Naive thymus-derived CD4-positive, alpha-beta T cell (primary cell): ENCODE measurements at regions of chr2 and their contacts with region 1.

Region 1: GRCh38 chr2:8681786-8682692 is at the start of gene ID2:
- DNase-seq: peak; percentile 96 to 99 (median 99)
- ATAC-seq: peak; percentile 83
- H3K4me3 ChIP-seq: peak within 1 kb of the TSS; percentile 89
- H3K4me3 Mint-ChIP-seq: peak within 1 kb of the TSS; percentile 89 to 100 (median 98)
- H3K27ac ChIP-seq: peak within 1 kb of the TSS; percentile 81
- H3K27ac Mint-ChIP-seq: peak within 1 kb of the TSS; percentile 89 to 97 (median 95)
- H3K4me1 ChIP-seq: peaks cover 10 to 24% of the 10 kb centered on the region in 2 donors
- H3K4me1 Mint-ChIP-seq: peaks cover 24 to 49% (median 43%) of the 10 kb centered on the region in 7 donors
- H3K27me3 ChIP-seq: peaks cover 0 to 18% of the 10 kb centered on the region in 2 donors
- H3K27me3 Mint-ChIP-seq: peaks cover 12 to 24% (median 20%) of the 10 kb centered on the region in 5 donors
- total RNA-seq, gene ID2: 43.0 to 185 (median 77.1) TPM

Region 2: DNA sequence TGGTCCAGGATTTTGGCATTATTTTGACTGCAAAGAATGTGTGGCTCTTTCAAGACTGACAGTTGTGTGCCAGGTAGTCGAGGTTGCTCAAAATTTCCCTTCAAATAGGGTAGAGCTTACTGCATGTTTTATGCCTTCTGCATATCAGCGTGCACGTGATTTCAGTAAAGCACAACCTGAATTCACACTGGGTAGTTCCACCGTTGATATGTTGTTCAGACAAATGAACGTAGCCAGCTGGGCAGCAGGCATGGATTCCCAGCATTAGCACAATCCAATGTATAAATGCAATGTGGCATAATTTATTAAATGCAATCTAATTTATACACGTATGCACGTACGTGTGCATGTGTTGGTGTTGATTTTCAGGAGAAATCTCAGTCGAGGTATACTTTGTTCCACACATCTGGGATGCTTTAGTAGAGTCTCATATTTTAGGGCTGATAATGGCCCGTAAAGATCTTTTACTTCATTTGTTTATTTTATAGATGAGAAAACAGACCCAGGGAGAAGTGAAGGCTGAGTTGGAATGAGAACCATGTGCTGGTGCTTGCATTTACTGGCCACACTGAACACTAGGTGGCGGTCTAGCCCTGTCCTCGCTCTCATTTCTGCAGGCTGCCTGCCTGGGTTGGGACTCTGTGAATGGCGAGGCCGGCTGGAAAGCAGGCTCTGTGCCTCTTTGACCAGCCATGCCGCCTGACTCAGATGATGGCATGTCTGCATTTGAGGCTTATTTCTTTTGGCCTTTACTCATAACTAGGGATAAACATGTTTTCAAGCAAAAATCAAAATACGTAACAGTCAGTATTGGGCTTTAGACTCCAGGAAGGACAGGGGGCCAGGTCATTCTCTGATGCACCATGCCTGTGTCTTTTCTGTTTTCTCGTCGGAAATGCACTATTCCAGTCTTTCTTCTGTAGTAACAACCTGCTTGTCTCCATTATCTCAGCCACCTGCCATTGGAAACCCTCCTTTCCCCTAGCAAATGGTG is 1644.4 kb before region 1 on chr2:
- CTCF ChIA-PET with region 1: no interaction called
- POLR2A ChIA-PET with region 1: no interaction called
- intact Hi-C with region 1: loop called in 1 of 2 experiments (anchors 2 kb)
- DNase-seq: peak; percentile 16 to 64 (median 56)
- ATAC-seq: peak; percentile 90
- H3K4me3 ChIP-seq: no peak overlapping the region
- H3K4me3 Mint-ChIP-seq: no peak overlapping the region
- H3K27ac ChIP-seq: no peak overlapping the region
- H3K27ac Mint-ChIP-seq: peak overlapping the region in 8 of 9 donors; percentile 25 to 74 (median 61)
- H3K4me1 ChIP-seq: no peaks in the 10 kb centered on the region
- H3K4me1 Mint-ChIP-seq: peaks cover 2 to 20% (median 10%) of the 10 kb centered on the region in 7 donors
- H3K27me3 ChIP-seq: no peaks in the 10 kb centered on the region
- H3K27me3 Mint-ChIP-seq: no peaks in the 10 kb centered on the region

Region 3: DNA sequence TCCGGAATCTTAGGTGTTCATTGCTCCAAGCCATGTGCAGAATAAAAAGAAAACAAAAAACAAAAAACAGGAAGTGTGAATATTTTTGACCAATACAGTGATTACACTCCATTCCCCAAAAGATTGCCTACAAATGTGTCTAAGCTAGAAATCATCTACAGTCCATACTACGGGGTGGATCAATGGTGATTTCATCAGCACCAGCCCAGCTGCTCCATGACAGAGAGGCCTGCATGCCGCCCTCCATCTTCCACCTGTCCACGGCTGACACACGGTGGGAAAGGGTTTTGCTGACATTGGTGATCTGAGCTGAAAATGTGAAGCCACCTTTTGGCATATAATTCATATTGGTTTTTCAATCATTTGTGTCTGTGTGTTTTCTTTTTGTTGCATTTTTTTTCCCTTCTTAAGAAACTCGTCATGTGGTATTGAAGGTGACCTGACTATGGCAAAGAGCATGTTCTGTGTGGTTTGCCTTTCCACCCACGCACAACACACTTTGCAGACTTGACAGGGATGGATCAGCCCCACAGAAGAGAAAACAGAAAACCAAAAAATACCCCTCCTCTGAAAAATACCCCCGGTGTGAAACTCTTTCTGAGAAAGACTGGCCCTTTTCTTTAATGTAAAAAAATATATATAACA is 1231.7 kb before region 1 on chr2:
- CTCF ChIA-PET with region 1: interaction called, 7 read pairs
- POLR2A ChIA-PET with region 1: interaction called, 27 read pairs
- intact Hi-C with region 1: loop called (anchors 1 kb)
- DNase-seq: peak in 8 of 9 donors; percentile 66 to 88 (median 72)
- ATAC-seq: peak; percentile 91
- H3K4me3 ChIP-seq: no peak overlapping the region
- H3K4me3 Mint-ChIP-seq: peak overlapping the region; percentile 39 to 87 (median 77)
- H3K27ac ChIP-seq: peak overlapping the region; percentile 60
- H3K27ac Mint-ChIP-seq: peak overlapping the region; percentile 90 to 98 (median 96)
- H3K4me1 ChIP-seq: peaks cover 41 to 65% of the 10 kb centered on the region in 2 donors
- H3K4me1 Mint-ChIP-seq: peaks cover 44 to 93% (median 78%) of the 10 kb centered on the region in 7 donors
- H3K27me3 ChIP-seq: no peaks in the 10 kb centered on the region
- H3K27me3 Mint-ChIP-seq: no peaks in the 10 kb centered on the region

Region 4: DNA sequence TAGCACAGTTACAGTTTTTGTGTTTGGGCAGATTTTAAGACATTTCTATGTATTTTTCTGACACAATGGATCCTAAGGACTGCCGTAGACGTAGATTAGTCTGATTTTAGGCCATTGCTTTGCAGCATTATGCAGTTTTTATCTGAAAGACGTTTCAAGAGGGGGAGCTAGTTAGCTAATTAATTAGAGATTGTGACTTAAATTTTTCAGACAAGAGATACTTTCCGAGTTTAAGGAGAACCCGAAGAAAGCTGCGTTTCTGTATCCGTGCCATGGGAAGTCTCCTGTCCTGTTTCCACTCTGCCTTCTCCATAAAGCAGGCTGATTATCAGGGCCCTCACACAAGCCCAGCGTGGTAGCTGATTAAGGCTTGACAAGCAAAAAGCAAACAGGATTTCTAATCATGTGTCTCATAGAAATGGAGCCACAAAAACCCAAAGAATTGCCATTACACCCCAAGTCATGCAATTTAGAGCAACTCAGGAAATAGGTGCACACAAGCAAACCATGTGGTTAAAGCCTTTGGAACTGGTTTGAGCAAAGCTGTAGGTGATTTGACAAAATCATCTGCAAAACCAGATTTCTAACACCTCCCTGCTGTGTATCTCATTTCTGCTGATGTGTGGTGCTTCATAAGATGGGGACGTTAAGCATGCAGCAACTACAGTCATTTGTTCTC is 956.7 kb before region 1 on chr2:
- CTCF ChIA-PET with region 1: no interaction called
- POLR2A ChIA-PET with region 1: interaction called, 4 read pairs
- intact Hi-C with region 1: loop called (anchors 2 kb)
- DNase-seq: peak in 5 of 9 donors; percentile 17 to 51 (median 38)
- ATAC-seq: peak; percentile 78
- H3K4me3 ChIP-seq: peak overlapping the region; percentile 25
- H3K4me3 Mint-ChIP-seq: peak overlapping the region in 9 of 10 donors; percentile 26 to 86 (median 58)
- H3K27ac ChIP-seq: no peak overlapping the region
- H3K27ac Mint-ChIP-seq: peak overlapping the region; percentile 8 to 89 (median 65)
- H3K4me1 ChIP-seq: peaks cover 17 to 34% of the 10 kb centered on the region in 2 donors
- H3K4me1 Mint-ChIP-seq: peaks cover 13 to 63% (median 34%) of the 10 kb centered on the region in 7 donors
- H3K27me3 ChIP-seq: no peaks in the 10 kb centered on the region
- H3K27me3 Mint-ChIP-seq: no peaks in the 10 kb centered on the region

Region 5: DNA sequence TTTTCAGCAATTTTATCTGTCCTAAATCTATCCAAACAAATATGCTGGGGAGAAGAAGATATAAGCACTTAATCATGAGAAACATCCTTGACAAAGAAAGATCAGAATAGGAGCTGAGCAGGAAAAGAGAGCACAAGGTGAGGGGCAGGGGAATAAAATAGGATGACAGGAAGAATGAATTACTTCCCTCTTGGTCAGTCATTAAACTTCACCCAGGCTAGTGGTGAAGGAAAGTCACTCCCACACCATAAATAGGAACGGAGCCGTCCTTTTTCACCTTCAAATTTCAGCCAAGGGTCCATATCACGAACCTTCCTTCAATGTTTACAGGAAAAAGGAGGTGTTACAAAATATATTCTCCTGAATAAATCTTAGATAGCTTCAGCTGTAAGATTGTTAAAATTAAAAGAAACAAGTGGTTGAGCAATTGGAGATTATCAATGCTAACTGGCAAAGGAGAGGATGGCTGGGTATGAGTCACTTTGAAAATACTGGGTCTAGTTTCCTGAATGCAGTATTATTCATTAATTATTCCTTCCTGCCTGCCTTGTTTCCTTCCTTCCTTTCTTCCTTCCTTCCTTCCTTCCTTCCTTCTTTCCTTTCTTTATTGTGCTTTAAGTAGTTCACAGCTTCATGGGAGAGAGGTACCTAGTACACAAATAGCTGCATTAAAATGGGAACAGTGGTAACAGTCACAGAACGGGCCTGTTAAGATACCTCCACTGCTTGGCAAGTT is 292.5 kb before region 1 on chr2:
- CTCF ChIA-PET with region 1: no interaction called
- POLR2A ChIA-PET with region 1: no interaction called
- intact Hi-C with region 1: no loop called
- DNase-seq: no peak
- ATAC-seq: no peak
- H3K4me3 ChIP-seq: no peak overlapping the region
- H3K4me3 Mint-ChIP-seq: no peak overlapping the region
- H3K27ac ChIP-seq: no peak overlapping the region
- H3K27ac Mint-ChIP-seq: no peak overlapping the region
- H3K4me1 ChIP-seq: no peaks in the 10 kb centered on the region
- H3K4me1 Mint-ChIP-seq: peaks cover 0 to 7% (median 0%) of the 10 kb centered on the region in 7 donors
- H3K27me3 ChIP-seq: no peaks in the 10 kb centered on the region
- H3K27me3 Mint-ChIP-seq: peaks cover 0 to 2% (median 0%) of the 10 kb centered on the region in 5 donors

Region 6: GRCh38 chr2:8477552-8478470 is 204.2 kb before region 1 on chr2:
- CTCF ChIA-PET with region 1: no interaction called
- POLR2A ChIA-PET with region 1: interaction called, 3 read pairs
- intact Hi-C with region 1: loop called in 1 of 2 experiments (anchors 5 kb)
- DNase-seq: peak in 2 of 9 donors; percentile 19
- ATAC-seq: peak; percentile 66
- H3K4me3 ChIP-seq: peak overlapping the region; percentile 15
- H3K4me3 Mint-ChIP-seq: peak overlapping the region; percentile 26 to 72 (median 53)
- H3K27ac ChIP-seq: no peak overlapping the region
- H3K27ac Mint-ChIP-seq: peak overlapping the region in 7 of 9 donors; percentile 5 to 75 (median 20)
- H3K4me1 ChIP-seq: peaks cover 5 to 57% of the 10 kb centered on the region in 2 donors
- H3K4me1 Mint-ChIP-seq: peaks cover 38 to 92% (median 53%) of the 10 kb centered on the region in 7 donors
- H3K27me3 ChIP-seq: no peaks in the 10 kb centered on the region
- H3K27me3 Mint-ChIP-seq: no peaks in the 10 kb centered on the region

Region 7: DNA sequence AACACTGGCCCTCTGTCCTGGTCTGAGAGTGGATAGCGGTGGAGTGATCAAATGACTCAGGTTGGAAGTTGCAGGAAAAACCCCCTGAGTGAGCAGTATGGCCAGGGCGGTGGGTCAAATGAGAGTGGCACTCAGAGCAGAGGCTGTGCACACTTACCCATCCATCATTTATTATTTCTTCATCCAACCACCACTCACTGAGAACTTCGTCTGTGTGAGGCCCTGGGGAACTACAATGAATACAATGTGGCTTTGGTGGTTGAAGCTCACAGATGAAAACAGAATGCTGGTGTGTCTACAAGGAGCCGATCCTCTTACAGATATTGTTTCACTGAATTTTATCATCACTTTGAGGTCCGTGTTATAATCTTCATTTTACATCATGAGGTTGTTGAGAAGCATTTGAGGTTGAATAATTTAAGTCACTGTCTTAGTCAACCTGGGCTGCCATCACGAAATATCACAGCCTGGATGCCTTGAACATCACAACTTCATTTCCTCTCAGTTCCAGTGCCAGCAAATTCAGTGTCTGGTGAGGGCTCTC is 73.6 kb before region 1 on chr2:
- CTCF ChIA-PET with region 1: interaction called, 4 read pairs
- POLR2A ChIA-PET with region 1: no interaction called
- intact Hi-C with region 1: loop called in 1 of 2 experiments (anchors 2 kb)
- DNase-seq: no peak
- ATAC-seq: peak; percentile 72
- H3K4me3 ChIP-seq: no peak overlapping the region
- H3K4me3 Mint-ChIP-seq: peak overlapping the region in 1 of 10 donors; percentile 47
- H3K27ac ChIP-seq: no peak overlapping the region
- H3K27ac Mint-ChIP-seq: peak overlapping the region in 1 of 9 donors; percentile 54
- H3K4me1 ChIP-seq: no peaks in the 10 kb centered on the region
- H3K4me1 Mint-ChIP-seq: peaks cover 0 to 29% (median 4%) of the 10 kb centered on the region in 7 donors
- H3K27me3 ChIP-seq: no peaks in the 10 kb centered on the region
- H3K27me3 Mint-ChIP-seq: peaks cover 0 to 2% (median 0%) of the 10 kb centered on the region in 5 donors

Region 8: DNA sequence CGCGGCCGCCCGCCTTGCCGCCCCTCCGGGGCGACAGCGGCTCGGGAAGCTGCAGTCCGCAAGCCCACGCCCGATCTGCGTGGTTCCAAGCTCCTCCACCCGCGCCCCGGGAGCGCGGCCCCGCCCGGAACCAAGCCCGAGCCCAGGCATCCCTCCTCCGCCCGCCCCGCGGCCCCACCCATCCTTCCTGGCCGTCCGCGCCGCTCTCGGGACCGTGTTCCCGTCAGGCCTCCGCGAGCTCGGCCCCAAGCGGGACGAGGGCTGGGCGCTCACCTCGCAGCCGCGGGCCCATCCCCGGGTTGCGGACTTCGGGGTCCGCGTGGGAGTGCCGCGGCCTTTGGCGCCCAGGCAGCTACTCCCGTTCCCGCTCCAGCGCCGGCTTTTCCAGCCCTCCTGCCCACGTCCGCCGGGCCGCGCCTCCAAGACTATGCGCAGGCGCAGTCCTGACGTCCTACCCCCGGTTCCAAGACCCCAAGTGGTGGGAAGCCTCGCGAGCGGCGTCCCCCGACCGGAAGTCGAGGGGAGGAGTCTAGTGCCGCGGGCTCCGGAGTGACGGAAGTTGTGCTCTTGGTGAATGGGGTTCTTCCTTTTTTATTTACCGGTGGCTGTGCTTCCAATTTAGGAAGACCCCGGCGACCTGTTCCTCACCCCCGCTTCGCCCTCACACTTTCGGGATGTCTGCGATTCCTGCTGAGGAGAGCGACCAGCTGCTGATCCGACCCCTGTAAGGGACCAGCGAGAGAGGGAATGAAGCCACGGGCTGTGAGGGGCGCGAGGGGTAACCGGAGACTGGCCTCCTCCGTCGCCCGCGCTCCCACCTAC is 741.3 kb after region 1 on chr2 and contains the starts of genes CPSF3 and ITGB1BP1:
- CTCF ChIA-PET with region 1: no interaction called
- POLR2A ChIA-PET with region 1: interaction called, 5 read pairs
- intact Hi-C with region 1: loop called in 1 of 2 experiments (anchors 1 kb)
- DNase-seq: peak; percentile 88 to 98 (median 94)
- ATAC-seq: peak; percentile 92
- H3K4me3 ChIP-seq: peak within 1 kb of the TSS; percentile 90
- H3K4me3 Mint-ChIP-seq: peak within 1 kb of the TSS in 5 of 10 donors; percentile 87 to 95 (median 92)
- H3K27ac ChIP-seq: peak within 1 kb of the TSS; percentile 84
- H3K27ac Mint-ChIP-seq: peak within 1 kb of the TSS in 8 of 9 donors; percentile 82 to 97 (median 92)
- H3K4me1 ChIP-seq: peaks cover 22 to 24% of the 10 kb centered on the region in 2 donors
- H3K4me1 Mint-ChIP-seq: peaks cover 20 to 41% (median 28%) of the 10 kb centered on the region in 7 donors
- H3K27me3 ChIP-seq: no peaks in the 10 kb centered on the region
- H3K27me3 Mint-ChIP-seq: no peaks in the 10 kb centered on the region
- total RNA-seq, gene CPSF3: 18.0 to 47.8 (median 21.7) TPM
- total RNA-seq, gene ITGB1BP1: 45.1 to 107 (median 54.3) TPM